Ascending aorta (tissue), 2 donors: ENCODE measurements at regions of chr12 and their contacts with region 1.

Region 1: DNA sequence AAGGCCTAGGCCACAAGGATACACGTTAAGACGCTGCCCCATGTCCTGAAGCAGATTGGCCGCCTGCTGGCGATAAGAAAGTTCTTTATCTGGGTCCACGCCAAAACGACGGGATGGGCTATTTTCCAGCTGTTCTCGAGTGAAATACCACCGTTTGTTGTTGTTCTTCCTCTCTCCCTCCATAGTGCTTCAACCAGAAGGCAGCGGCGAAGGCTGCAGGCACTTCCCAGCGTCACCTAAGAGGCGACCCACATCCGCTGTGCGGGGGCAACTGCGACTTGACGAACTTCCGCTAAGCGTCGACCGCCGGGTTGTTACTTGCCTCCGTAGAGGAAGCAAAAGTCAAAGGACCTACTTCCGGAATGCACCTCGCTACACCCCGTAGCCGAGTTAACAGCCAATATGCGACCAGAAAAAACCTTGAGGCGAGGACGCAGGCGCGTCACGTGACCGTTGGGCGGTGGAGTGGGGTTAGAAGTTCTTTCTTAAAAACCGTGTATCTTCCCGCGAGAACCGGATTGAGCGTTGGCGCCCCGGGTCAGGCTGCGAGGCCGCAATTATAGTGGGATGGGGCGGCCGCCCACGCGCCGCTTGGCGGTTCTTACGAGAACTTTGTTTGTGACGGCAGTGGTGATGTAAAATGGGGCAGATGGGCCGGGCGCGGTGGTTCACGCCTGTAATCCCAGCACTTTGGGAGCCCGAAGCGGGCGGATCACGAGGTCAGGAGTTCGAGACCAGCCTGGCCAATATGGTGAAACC is at the start of gene CCNT1:
- DNase-seq: peak; percentile 98 to 100
- H3K4me3 ChIP-seq: peak within 1 kb of the TSS; percentile 73 to 99
- H3K27ac ChIP-seq: peak within 1 kb of the TSS; percentile 89 to 99
- H3K4me1 ChIP-seq: peaks cover 8 to 16% of the 10 kb centered on the region in 2 donors
- H3K27me3 ChIP-seq: no peaks in the 10 kb centered on the region
- CTCF ChIP-seq: peak in 2 of 3 experiments; percentile 10 to 17
- total RNA-seq, gene CCNT1: 28.0 TPM

Region 2: GRCh38 chr12:47904713-47905310 is 811.9 kb before region 1 on chr12 and contains the start of gene VDR:
- intact Hi-C with region 1: loop called (anchors 5 kb)
- DNase-seq: peak; percentile 59 to 89
- H3K4me3 ChIP-seq: peak within 1 kb of the TSS; percentile 61 to 78
- H3K27ac ChIP-seq: peak within 1 kb of the TSS; percentile 47 to 65
- H3K4me1 ChIP-seq: peaks cover 0 to 21% of the 10 kb centered on the region in 2 donors
- H3K27me3 ChIP-seq: no peaks in the 10 kb centered on the region
- CTCF ChIP-seq: peak in 1 of 3 experiments; percentile 10
- total RNA-seq, gene VDR: 13.1 TPM

Region 3: GRCh38 chr12:48681738-48682532 is 34.7 kb before region 1 on chr12 and contains the start of gene KANSL2:
- intact Hi-C with region 1: loop called (anchors 1 kb)
- DNase-seq: peak; percentile 99
- H3K4me3 ChIP-seq: peak within 1 kb of the TSS; percentile 75 to 95
- H3K27ac ChIP-seq: peak within 1 kb of the TSS; percentile 87 to 94
- H3K4me1 ChIP-seq: peaks cover 20 to 32% of the 10 kb centered on the region in 2 donors
- H3K27me3 ChIP-seq: no peaks in the 10 kb centered on the region
- CTCF ChIP-seq: no peak
- total RNA-seq, gene KANSL2: 30.1 TPM

Region 4: GRCh38 chr12:48788854-48789796 is 72.5 kb after region 1 on chr12 and contains the start of gene ADCY6:
- intact Hi-C with region 1: loop called (anchors 2 kb)
- DNase-seq: peak in 1 of 2 donors; percentile 89
- H3K4me3 ChIP-seq: peak within 1 kb of the TSS; percentile 90 to 97
- H3K27ac ChIP-seq: peak within 1 kb of the TSS; percentile 97 to 99
- H3K4me1 ChIP-seq: peaks cover 7 to 15% of the 10 kb centered on the region in 2 donors
- H3K27me3 ChIP-seq: no peaks in the 10 kb centered on the region
- CTCF ChIP-seq: no peak
- total RNA-seq, gene ADCY6: 65.0 TPM

Region 5: GRCh38 chr12:48957141-48958048 is 240.7 kb after region 1 on chr12 and contains the start of gene ARF3:
- intact Hi-C with region 1: loop called (anchors 5 kb)
- DNase-seq: peak; percentile 75 to 96
- H3K4me3 ChIP-seq: peak within 1 kb of the TSS; percentile 72 to 95
- H3K27ac ChIP-seq: peak within 1 kb of the TSS; percentile 81 to 84
- H3K4me1 ChIP-seq: peaks cover 0 to 18% of the 10 kb centered on the region in 2 donors
- H3K27me3 ChIP-seq: no peaks in the 10 kb centered on the region
- CTCF ChIP-seq: no peak
- total RNA-seq, gene ARF3: 68.4 TPM

Region 6: DNA sequence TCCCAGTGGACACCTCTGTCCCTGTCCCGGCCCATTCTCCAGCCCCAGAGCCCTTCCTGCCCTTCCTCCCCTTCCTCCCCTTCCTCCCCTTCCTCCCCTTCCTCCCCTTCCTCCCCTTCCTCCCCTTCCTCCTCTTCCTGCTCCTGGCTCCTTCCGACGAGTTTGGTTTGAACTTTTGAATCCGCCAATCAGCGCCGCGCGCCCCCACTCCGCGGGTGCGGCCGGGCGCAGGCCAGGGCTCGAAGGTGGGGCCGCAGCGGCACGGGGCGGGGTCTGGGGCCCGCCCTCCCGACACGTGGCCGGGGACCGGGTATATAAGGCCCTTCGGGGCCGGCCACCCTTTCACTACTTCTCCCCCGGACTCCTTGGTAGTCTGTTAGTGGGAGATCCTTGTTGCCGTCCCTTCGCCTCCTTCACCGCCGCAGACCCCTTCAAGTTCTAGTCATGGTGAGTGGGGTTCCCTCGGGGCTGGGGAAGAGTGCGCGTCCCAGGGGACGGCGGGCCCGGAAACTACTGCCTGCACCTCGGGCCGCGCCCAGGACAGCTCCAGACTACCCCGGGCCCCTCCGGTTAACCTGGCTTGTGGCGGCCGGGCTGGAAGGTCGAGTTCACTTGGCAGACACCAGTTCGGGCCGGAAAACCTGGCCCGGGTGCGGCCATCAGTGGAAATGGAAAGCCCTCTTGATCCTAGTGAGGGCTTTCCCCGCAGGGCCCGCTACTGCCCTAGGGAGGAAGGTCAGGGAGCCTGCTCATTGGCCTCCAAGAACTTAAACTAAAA is 548.3 kb after region 1 on chr12 and contains the start of gene TUBA1C:
- intact Hi-C with region 1: loop called (anchors 10 kb)
- DNase-seq: peak; percentile 78 to 95
- H3K4me3 ChIP-seq: peak within 1 kb of the TSS; percentile 85 to 88
- H3K27ac ChIP-seq: peak within 1 kb of the TSS; percentile 95 to 99
- H3K4me1 ChIP-seq: peaks cover 7 to 36% of the 10 kb centered on the region in 2 donors
- H3K27me3 ChIP-seq: no peaks in the 10 kb centered on the region
- CTCF ChIP-seq: peak in 1 of 3 experiments; percentile 9
- total RNA-seq, gene TUBA1C: 370 TPM

Region 7: DNA sequence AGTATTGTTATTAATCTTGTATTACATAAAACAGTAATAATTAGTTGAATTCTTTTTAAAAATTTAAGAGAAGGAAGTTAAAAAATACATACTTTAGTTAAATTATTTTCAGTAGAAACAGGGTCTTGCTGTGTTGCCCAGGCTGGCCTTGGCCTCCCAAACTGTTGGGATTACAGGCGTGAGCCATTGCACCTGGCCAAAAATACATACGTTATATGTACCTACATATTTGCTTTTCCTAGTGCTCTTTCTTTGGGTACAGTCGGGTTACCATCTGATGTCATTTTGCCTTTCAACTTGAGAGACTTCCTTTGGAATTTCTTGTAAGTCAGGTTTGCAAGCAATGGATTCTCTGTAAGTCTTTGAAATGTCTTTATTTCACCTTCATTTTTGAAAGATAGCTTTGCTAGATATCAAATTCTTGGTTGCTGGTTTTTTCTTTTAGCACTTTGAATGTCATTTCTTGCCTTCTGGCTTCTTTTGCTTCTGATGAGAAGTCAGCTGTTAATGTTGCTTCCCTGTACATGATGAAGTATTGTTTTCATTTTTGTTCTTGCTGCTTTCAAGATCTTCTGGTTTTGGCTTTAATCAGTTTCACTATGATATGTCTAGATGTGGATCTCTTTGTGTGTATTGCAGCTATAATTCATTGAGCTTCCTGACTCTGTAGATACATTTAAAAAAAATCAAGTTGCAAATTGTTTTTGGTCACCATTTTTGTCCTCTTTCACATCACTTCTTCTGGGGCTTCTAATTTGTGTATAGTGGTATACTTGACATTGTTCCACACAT is 735.0 kb after region 1 on chr12:
- intact Hi-C with region 1: no loop called
- DNase-seq: no peak
- H3K4me3 ChIP-seq: no peak overlapping the region
- H3K27ac ChIP-seq: no peak overlapping the region
- H3K4me1 ChIP-seq: no peaks in the 10 kb centered on the region
- H3K27me3 ChIP-seq: no peaks in the 10 kb centered on the region
- CTCF ChIP-seq: no peak